ENCODE measurements at regions of chr5 and their contacts with region 1.

Region 1: GRCh38 chr5:151675611-151676313 is 11.0 kb downstream of the SPARC start:
- DNase-seq: no peak
- ATAC-seq: no peak
- H3K4me3 ChIP-seq: peak overlapping the region; percentile 24
- H3K27ac ChIP-seq: peak overlapping the region; percentile 89
- H3K4me1 ChIP-seq: peaks cover 92% of the 10 kb centered on the region
- H3K27me3 ChIP-seq: no peaks in the 10 kb centered on the region
- CTCF ChIP-seq: no peak

Region 2: DNA sequence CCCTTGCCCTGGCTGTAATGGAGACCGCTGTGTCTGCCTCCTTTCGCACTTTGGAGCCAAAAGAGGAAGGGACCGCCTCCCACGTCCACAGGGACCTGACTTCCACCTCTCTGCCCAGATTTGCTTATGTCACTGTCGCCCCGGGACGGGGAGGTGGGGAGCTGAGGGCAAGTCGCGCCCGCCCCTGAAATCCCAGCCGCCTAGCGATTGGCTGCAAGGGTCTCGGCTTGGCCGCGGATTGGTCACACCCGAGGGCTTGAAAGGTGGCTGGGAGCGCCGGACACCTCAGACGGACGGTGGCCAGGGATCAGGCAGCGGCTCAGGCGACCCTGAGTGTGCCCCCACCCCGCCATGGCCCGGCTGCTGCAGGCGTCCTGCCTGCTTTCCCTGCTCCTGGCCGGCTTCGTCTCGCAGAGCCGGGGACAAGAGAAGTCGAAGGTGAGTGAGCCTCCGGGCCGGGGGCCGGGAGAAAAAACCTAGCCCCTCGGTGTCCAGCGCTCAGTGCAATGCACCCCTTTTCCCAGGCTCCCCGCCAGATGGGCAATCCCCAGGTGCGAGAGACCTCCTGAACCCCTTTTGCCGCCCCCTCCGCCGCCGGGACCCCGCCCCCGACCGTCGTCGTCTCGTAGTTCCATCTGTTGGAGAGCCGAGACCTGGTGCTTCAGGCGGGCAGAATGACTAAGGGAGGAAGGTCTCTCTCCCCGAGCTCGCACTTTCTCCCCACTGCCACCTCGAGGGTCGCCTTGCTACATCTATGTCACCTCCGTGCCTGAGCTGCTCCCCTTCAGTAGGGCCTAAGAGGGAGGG is 655.3 kb before region 1 on chr5 and contains the start of gene GPX3:
- intact Hi-C with region 1: loop called in 1 of 2 experiments (anchors 10 kb)
- DNase-seq: peak; percentile 96 to 98
- ATAC-seq: peak; percentile 76 to 84 (median 77)
- H3K4me3 ChIP-seq: peak within 1 kb of the TSS; percentile 98
- H3K27ac ChIP-seq: peak within 1 kb of the TSS; percentile 96
- H3K4me1 ChIP-seq: peaks cover 50% of the 10 kb centered on the region
- H3K27me3 ChIP-seq: no peaks in the 10 kb centered on the region
- CTCF ChIP-seq: no peak
- total RNA-seq, gene GPX3: 447 to 852 (median 690) TPM

Region 3: DNA sequence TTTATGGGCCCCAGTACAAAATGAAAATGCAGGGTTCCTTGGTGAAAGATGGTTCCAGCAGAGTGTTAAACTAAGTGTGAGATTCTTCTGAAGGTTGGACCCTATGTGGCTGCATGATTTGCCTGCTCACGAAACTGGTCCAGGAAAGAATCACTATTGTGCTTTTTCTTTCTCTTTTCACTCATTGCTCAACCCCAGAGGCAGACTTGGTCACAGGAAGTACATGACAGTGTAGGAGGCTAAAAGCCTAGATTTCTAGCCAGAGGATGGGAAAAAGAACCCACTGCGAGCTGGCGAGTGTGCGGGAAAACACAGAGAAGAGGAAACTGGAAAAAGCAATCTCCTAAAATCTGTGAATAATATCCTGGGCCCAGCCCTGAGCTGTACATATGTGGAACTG is 347.0 kb before region 1 on chr5:
- intact Hi-C with region 1: no loop called
- DNase-seq: no peak
- ATAC-seq: no peak
- H3K4me3 ChIP-seq: no peak overlapping the region
- H3K27ac ChIP-seq: no peak overlapping the region
- H3K4me1 ChIP-seq: no peaks in the 10 kb centered on the region
- H3K27me3 ChIP-seq: no peaks in the 10 kb centered on the region
- CTCF ChIP-seq: no peak

Measured in psoas muscle (tissue), 8 donors.